ENCODE measurements at regions of chr1 and their contacts with region 1.

Region 1: GRCh38 chr1:206658264-206658980 is 23.1 kb downstream of the DYRK3 start:
- DNase-seq: peak in 1 of 2 donors; percentile 53
- ATAC-seq: peak; percentile 40 to 73 (median 65)
- H3K4me3 ChIP-seq: peak overlapping the region in 8 of 10 donors; percentile 0 to 40 (median 36)
- H3K27ac ChIP-seq: peak overlapping the region; percentile 68 to 96 (median 84)
- H3K4me1 ChIP-seq: peaks cover 20 to 93% (median 77%) of the 10 kb centered on the region in 9 donors
- H3K27me3 ChIP-seq: peaks cover 0 to 1% (median 0%) of the 10 kb centered on the region in 7 donors
- CTCF ChIP-seq: peak; percentile 61 to 93 (median 88)

Region 2: GRCh38 chr1:206628916-206629315 is 29.5 kb before region 1 on chr1:
- intact Hi-C with region 1: no loop called
- DNase-seq: no peak
- ATAC-seq: no peak
- H3K4me3 ChIP-seq: no peak overlapping the region
- H3K27ac ChIP-seq: no peak overlapping the region
- H3K4me1 ChIP-seq: peaks cover 0 to 15% (median 8%) of the 10 kb centered on the region in 9 donors
- H3K27me3 ChIP-seq: no peaks in the 10 kb centered on the region
- CTCF ChIP-seq: no peak

Region 3: DNA sequence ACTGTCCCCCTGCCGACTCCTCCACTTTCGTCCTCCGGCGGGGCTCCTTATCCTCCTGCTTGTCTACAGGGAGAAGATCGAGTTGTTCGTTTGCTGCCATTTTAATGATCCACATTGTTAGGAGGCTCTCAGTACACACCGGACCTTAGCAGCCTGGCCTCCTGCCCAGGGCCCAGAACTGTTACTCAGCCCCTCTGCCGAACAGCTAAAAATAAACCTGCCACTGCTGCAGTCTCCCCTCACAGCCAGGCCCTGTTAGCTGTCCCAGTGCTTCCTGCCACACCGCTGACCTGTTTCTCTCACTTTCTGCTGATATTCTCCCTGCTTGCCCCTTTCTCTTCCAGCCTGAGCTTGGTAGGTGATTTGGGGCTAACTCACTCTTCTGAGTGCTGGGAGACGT is 34.6 kb after region 1 on chr1:
- intact Hi-C with region 1: loop called in 2 of 10 experiments (anchors 2 to 5 kb)
- DNase-seq: peak; percentile 84 to 85
- ATAC-seq: peak; percentile 74 to 92 (median 86)
- H3K4me3 ChIP-seq: peak overlapping the region in 6 of 10 donors; percentile 4 to 21 (median 16)
- H3K27ac ChIP-seq: peak overlapping the region; percentile 80 to 99 (median 96)
- H3K4me1 ChIP-seq: peaks cover 53 to 100% (median 100%) of the 10 kb centered on the region in 9 donors
- H3K27me3 ChIP-seq: no peaks in the 10 kb centered on the region
- CTCF ChIP-seq: no peak